Tibial artery (tissue), 4 donors: ENCODE measurements at regions of chr2 and their contacts with region 1.

Region 1: GRCh38 chr2:23566236-23567142 is 181.5 kb downstream of the KLHL29 start:
- DNase-seq: no peak
- H3K4me3 ChIP-seq: no peak overlapping the region
- H3K27ac ChIP-seq: peak overlapping the region; percentile 79 to 80
- H3K4me1 ChIP-seq: peaks cover 0 to 92% (median 63%) of the 10 kb centered on the region in 4 donors
- H3K27me3 ChIP-seq: no peaks in the 10 kb centered on the region
- CTCF ChIP-seq: peak in 1 of 2 experiments; percentile 16

Region 2: GRCh38 chr2:23505218-23505983 is 61.1 kb before region 1 on chr2:
- intact Hi-C with region 1: loop called (anchors 10 kb)
- DNase-seq: no peak
- H3K4me3 ChIP-seq: no peak overlapping the region
- H3K27ac ChIP-seq: peak overlapping the region; percentile 45 to 65
- H3K4me1 ChIP-seq: peaks cover 0 to 70% (median 48%) of the 10 kb centered on the region in 4 donors
- H3K27me3 ChIP-seq: no peaks in the 10 kb centered on the region
- CTCF ChIP-seq: no peak

Region 3: DNA sequence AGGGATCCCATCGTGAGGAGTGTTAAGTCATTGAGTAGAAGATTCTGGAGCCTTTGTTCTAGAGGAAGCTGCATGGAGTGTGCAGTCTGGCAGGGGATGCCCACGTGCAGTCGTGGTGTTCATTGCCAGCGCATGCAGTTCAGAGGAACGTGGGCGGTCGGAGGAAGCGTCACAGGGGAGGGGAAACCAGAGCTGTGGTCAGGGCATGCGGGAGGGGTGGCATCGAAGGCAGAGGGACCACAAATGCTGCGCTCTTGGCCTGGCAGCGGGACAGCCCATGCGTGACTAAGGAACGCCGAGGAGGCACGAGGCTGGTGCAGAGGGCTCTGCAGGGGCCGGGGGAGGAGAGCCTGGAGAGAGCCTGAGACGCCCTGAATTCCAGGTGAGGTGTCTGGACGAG is 40.4 kb before region 1 on chr2:
- intact Hi-C with region 1: loop called (anchors 5 kb)
- DNase-seq: no peak
- H3K4me3 ChIP-seq: no peak overlapping the region
- H3K27ac ChIP-seq: peak overlapping the region; percentile 75 to 85
- H3K4me1 ChIP-seq: peaks cover 0 to 46% (median 38%) of the 10 kb centered on the region in 4 donors
- H3K27me3 ChIP-seq: no peaks in the 10 kb centered on the region
- CTCF ChIP-seq: no peak